ENCODE measurements at regions of chr5 and their contacts with region 1.

Region 1: GRCh38 chr5:97162045-97162444 is 19.6 kb upstream of the LIX1 start:
- DNase-seq: peak; percentile 84
- ATAC-seq: peak; percentile 57
- H3K4me3 ChIP-seq: no peak overlapping the region
- H3K27ac ChIP-seq: no peak overlapping the region
- H3K4me1 ChIP-seq: no peaks in the 10 kb centered on the region
- H3K27me3 ChIP-seq: no peaks in the 10 kb centered on the region
- CTCF ChIP-seq: peak; percentile 89
- POLR2A ChIP-seq: no peak
- RAD21 ChIP-seq: peak; percentile 89

Region 2: GRCh38 chr5:96601811-96602244 is 560.2 kb before region 1 on chr5:
- CTCF ChIA-PET with region 1: no interaction called
- POLR2A ChIA-PET with region 1: no interaction called
- dilution Hi-C with region 1: no loop called
- in situ Hi-C with region 1: loop called (anchors 25 kb)
- intact Hi-C with region 1: no loop called
- DNase-seq: peak; percentile 75
- ATAC-seq: peak; percentile 86
- H3K4me3 ChIP-seq: no peak overlapping the region
- H3K27ac ChIP-seq: no peak overlapping the region
- H3K4me1 ChIP-seq: no peaks in the 10 kb centered on the region
- H3K27me3 ChIP-seq: no peaks in the 10 kb centered on the region
- CTCF ChIP-seq: peak; percentile 80
- POLR2A ChIP-seq: no peak
- RAD21 ChIP-seq: peak; percentile 82

Region 3: DNA sequence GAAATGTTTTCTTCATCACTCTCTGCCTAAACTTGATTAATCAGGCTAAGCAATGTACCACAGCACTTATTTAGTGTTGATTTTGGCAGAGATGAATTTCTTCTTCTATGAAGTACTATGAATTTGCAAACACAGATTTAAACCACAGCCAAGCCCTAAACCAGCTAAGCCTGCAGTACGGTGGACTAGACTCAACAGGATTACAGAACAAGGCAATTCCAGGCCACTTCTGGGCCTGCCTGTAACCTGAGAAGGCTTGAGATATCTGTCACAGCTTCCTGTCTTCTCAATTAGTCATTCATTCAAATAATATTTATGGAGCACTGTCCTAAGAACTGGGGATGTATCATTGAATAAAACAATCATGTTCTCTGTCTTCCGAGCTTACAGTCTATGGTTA is 532.3 kb before region 1 on chr5:
- CTCF ChIA-PET with region 1: no interaction called
- POLR2A ChIA-PET with region 1: no interaction called
- dilution Hi-C with region 1: no loop called
- in situ Hi-C with region 1: loop called (anchors 25 kb)
- intact Hi-C with region 1: loop called (anchors 5 kb)
- DNase-seq: peak; percentile 89
- ATAC-seq: peak; percentile 81
- H3K4me3 ChIP-seq: no peak overlapping the region
- H3K27ac ChIP-seq: no peak overlapping the region
- H3K4me1 ChIP-seq: peaks cover 25% of the 10 kb centered on the region
- H3K27me3 ChIP-seq: no peaks in the 10 kb centered on the region
- CTCF ChIP-seq: no peak
- POLR2A ChIP-seq: no peak
- RAD21 ChIP-seq: no peak

Region 4: DNA sequence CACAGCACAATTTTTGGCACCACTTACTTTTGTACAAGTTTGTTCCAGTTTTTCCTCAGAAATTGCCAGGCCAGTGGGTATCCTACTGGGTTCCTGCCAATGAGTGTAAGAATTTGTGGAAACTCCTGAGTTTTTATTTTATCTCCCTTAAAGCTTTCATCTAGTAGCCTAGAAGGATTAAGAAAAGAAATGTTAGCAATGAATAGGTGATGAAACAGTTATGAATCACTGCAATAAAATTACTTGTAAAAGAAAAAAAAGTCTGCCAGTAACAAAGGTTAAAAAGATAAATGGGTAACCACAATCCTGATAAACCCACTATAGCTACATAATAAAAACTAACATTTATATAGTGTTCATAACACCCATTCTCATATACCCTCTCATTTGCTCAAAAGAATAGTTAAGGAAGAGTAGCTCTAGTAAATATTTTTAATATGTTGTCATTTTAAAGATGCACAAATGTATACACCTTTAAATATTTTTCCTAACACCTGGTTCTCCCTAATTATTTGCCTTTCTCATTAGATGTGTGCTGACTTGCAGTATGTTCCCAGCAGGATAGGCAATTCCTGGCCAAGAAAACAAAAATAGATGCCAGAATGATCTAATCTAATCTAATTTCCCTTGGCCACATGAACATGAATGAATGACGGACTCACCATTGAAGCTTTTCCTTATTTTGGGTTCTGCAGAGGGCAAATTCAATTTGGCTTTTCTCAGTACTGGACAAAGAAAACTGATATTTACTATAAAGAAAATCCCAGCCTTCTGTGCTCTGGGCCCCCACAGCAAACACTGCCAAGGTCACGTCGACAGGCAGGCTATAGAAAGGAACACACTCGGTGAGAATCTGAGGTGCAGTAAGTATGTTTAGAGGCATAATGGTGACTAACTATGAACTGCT is 380.8 kb before region 1 on chr5:
- CTCF ChIA-PET with region 1: no interaction called
- POLR2A ChIA-PET with region 1: no interaction called
- dilution Hi-C with region 1: loop called (anchors 25 kb)
- in situ Hi-C with region 1: no loop called
- intact Hi-C with region 1: no loop called
- DNase-seq: peak; percentile 49
- ATAC-seq: peak; percentile 43
- H3K4me3 ChIP-seq: no peak overlapping the region
- H3K27ac ChIP-seq: no peak overlapping the region
- H3K4me1 ChIP-seq: peaks cover 8% of the 10 kb centered on the region
- H3K27me3 ChIP-seq: no peaks in the 10 kb centered on the region
- CTCF ChIP-seq: no peak
- POLR2A ChIP-seq: no peak
- RAD21 ChIP-seq: no peak

Region 5: DNA sequence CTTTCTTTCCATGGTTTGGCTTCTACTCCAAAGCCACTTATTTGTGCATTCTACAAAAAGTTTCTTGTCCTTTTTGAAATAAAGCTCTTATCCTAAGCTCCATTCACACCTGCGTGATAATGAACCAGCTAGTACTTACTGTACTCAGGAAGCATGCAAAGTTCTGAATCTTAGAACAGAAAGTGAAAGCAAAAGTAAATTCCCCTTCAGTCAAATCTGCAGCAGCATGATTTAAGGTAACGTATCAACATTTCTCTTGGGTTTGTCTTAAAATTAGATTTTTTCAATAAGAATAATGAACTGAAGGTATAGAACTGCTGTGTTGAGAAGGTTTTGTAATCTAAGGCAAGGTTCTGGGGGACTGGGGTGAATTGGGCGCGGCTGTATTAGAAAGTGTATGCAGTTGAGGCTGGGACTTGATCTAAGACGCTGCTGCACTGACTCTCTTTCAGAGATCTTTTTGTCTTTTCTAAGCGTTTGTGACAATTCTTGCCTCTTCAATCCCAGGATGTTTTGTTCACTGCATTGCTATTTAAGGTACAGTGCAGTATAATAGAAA is 285.7 kb before region 1 on chr5 and contains the start of gene ERAP2:
- CTCF ChIA-PET with region 1: interaction called, 3 read pairs
- POLR2A ChIA-PET with region 1: no interaction called
- dilution Hi-C with region 1: loop called (anchors 25 kb)
- in situ Hi-C with region 1: loop called (anchors 5 kb)
- intact Hi-C with region 1: no loop called
- DNase-seq: peak; percentile 52
- ATAC-seq: peak; percentile 77
- H3K4me3 ChIP-seq: peak within 1 kb of the TSS; percentile 79
- H3K27ac ChIP-seq: peak within 1 kb of the TSS; percentile 61
- H3K4me1 ChIP-seq: peaks cover 4% of the 10 kb centered on the region
- H3K27me3 ChIP-seq: no peaks in the 10 kb centered on the region
- CTCF ChIP-seq: no peak
- POLR2A ChIP-seq: no peak
- RAD21 ChIP-seq: no peak
- total RNA-seq, gene ERAP2: 18.3 and 21.3 TPM in 2 replicates

Region 6: GRCh38 chr5:96997265-96997859 is 164.7 kb before region 1 on chr5:
- CTCF ChIA-PET with region 1: interaction called, 3 read pairs
- POLR2A ChIA-PET with region 1: no interaction called
- dilution Hi-C with region 1: no loop called
- in situ Hi-C with region 1: no loop called
- intact Hi-C with region 1: loop called (anchors 1 kb)
- DNase-seq: peak; percentile 63
- ATAC-seq: peak; percentile 82
- H3K4me3 ChIP-seq: no peak overlapping the region
- H3K27ac ChIP-seq: no peak overlapping the region
- H3K4me1 ChIP-seq: peaks cover 3% of the 10 kb centered on the region; the same call in 1 of the 2 replicates
- H3K27me3 ChIP-seq: no peaks in the 10 kb centered on the region
- CTCF ChIP-seq: peak; percentile 52
- POLR2A ChIP-seq: no peak
- RAD21 ChIP-seq: peak; percentile 48

Region 7: GRCh38 chr5:97338729-97339128 is 176.7 kb after region 1 on chr5:
- CTCF ChIA-PET with region 1: no interaction called
- POLR2A ChIA-PET with region 1: no interaction called
- dilution Hi-C with region 1: no loop called
- in situ Hi-C with region 1: no loop called
- intact Hi-C with region 1: no loop called
- DNase-seq: peak; percentile 3
- ATAC-seq: no peak
- H3K4me3 ChIP-seq: no peak overlapping the region
- H3K27ac ChIP-seq: no peak overlapping the region
- H3K4me1 ChIP-seq: no peaks in the 10 kb centered on the region
- H3K27me3 ChIP-seq: no peaks in the 10 kb centered on the region
- CTCF ChIP-seq: no peak
- POLR2A ChIP-seq: no peak
- RAD21 ChIP-seq: no peak

Region 8: GRCh38 chr5:97550164-97550563 is 388.1 kb after region 1 on chr5:
- CTCF ChIA-PET with region 1: no interaction called
- POLR2A ChIA-PET with region 1: no interaction called
- dilution Hi-C with region 1: no loop called
- in situ Hi-C with region 1: no loop called
- intact Hi-C with region 1: no loop called
- DNase-seq: peak; percentile 72
- ATAC-seq: peak; percentile 69
- H3K4me3 ChIP-seq: no peak overlapping the region
- H3K27ac ChIP-seq: no peak overlapping the region
- H3K4me1 ChIP-seq: peaks cover 5% of the 10 kb centered on the region; the same call in 1 of the 2 replicates
- H3K27me3 ChIP-seq: no peaks in the 10 kb centered on the region
- CTCF ChIP-seq: no peak
- POLR2A ChIP-seq: no peak
- RAD21 ChIP-seq: no peak